ENCODE measurements at regions of chr19 and their contacts with region 1.

Region 1: DNA sequence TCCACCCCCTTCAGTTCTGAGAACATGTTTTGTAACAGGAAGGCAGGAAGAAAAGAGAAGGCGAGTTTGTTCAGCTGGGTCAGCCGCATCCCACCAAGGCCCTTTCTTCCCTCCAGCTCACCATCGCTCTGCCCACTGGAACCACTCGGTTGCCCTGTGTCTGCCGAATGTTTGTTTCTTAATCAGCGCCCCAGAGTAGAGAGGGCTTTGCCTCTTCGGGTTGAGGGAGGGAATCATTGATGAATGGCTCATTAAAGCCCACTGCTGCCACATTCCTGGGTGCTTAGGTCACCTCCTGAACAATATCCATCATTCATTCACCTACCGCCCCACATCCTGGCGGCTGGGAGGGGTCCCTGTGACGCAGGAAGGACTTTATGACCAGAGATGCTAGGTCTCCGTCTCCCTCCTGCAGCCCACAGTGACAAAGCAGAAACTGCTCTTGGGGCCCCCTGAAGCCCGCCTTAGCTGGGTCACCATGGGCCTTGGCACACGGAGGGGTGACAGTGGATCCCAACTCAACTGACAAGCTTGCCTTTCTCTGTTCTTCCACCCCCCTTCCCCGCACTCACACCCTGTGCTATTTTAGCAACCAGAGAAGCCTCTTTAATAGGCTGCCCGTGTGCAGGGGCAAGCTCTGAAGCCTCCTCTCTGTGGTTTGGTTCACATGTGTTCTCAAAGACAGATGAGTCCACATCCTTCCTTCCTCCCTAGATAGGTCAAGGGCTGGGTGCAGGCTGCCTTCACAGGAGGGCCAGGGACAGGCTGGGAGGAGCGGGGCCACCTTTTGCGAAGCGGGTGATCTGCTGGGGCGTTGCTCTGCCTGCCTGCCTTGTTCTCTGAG is 46.2 kb downstream of the ACTN4 start:
- DNase-seq: no peak
- H3K4me3 ChIP-seq: peak overlapping the region in 1 of 4 donors; percentile 5
- H3K27ac ChIP-seq: peak overlapping the region; percentile 92 to 98 (median 96)
- H3K4me1 ChIP-seq: peaks cover 97 to 100% (median 99%) of the 10 kb centered on the region in 4 donors
- H3K27me3 ChIP-seq: no peaks in the 10 kb centered on the region
- CTCF ChIP-seq: no peak
- EP300 ChIP-seq: no peak
- POLR2A ChIP-seq: no peak

Region 2: GRCh38 chr19:38527466-38528136 is 166.0 kb before region 1 on chr19:
- intact Hi-C with region 1: no loop called
- DNase-seq: no peak
- H3K4me3 ChIP-seq: no peak overlapping the region
- H3K27ac ChIP-seq: no peak overlapping the region
- H3K4me1 ChIP-seq: no peaks in the 10 kb centered on the region
- H3K27me3 ChIP-seq: peaks cover 0 to 33% (median 0%) of the 10 kb centered on the region in 4 donors
- CTCF ChIP-seq: no peak
- EP300 ChIP-seq: no peak
- POLR2A ChIP-seq: no peak

Region 3: GRCh38 chr19:38647368-38647965 is 46.1 kb before region 1 on chr19 and contains the start of gene ACTN4:
- intact Hi-C with region 1: loop called (anchors 5 kb)
- DNase-seq: peak; percentile 99
- H3K4me3 ChIP-seq: peak within 1 kb of the TSS; percentile 97 to 100 (median 98)
- H3K27ac ChIP-seq: peak within 1 kb of the TSS; percentile 92 to 99 (median 98)
- H3K4me1 ChIP-seq: peaks cover 33 to 41% (median 39%) of the 10 kb centered on the region in 4 donors
- H3K27me3 ChIP-seq: no peaks in the 10 kb centered on the region
- CTCF ChIP-seq: peak in 1 of 3 experiments; percentile 38
- EP300 ChIP-seq: no peak
- POLR2A ChIP-seq: peak; percentile 96
- total RNA-seq, gene ACTN4: 416 to 816 (median 598) TPM